ENCODE measurements at regions of chr6 and their contacts with region 1.

Region 1: GRCh38 chr6:21593412-21593926 is at the start of gene SOX4:
- DNase-seq: peak; percentile 92
- ATAC-seq: peak; percentile 74
- H3K4me3 ChIP-seq: peak within 1 kb of the TSS; percentile 56 to 86 (median 71)
- H3K27ac ChIP-seq: no peak within 1 kb of the TSS
- H3K4me1 ChIP-seq: peaks cover 38% of the 10 kb centered on the region
- H3K27me3 ChIP-seq: peaks cover 0 to 37% of the 10 kb centered on the region in 2 experiments; a peak in 3 of 5 replicates
- CTCF ChIP-seq: no peak
- EP300 ChIP-seq: no peak
- POLR2A ChIP-seq: peak; percentile 75 to 76
- RAD21 ChIP-seq: no peak
- total RNA-seq, gene SOX4: 3.4 and 3.5 TPM in 2 replicates

Region 2: DNA sequence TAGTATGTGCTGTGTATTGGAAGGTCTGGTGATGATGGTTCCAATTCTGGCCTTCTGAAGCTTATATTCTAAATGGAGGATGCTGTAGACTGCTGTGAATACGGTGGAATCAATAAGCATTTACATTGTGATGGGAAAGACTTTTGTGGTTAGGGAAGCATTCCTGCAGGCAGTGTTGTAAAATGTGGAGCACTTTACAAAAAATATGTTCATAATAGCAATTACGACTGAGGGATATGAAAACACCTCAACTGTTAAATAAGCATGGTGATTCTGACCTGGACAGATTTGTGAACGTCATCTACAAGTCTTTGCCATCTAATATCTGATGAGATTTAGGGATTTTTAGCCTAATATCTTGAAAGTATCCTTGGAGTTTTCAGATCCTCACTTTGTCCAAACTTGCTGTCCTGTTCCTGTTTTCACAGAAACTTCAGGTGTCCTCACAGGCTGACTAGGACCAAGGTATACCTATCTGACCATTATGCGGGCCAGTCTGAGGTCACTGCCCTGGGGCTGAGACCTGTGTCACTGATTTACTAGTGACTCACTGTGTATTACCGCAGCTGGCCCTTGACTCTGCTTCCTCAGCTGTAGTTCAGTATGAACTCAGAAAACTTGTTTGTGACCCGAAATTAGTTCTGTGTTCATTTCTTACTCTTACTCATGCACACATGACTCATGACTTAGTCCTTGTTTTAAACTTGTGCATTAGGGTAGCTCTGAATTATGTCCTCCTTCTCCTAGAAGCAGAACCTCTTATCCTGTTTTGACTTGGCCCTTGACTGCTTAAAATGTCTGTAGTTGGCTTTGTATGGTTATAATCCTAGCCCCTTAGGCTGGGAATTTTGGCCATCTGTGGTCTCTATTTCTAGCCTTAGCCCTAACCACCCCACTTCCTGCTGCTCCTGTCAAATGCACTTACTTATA is 716.2 kb before region 1 on chr6:
- CTCF ChIA-PET with region 1: interaction called, 18 read pairs
- POLR2A ChIA-PET with region 1: interaction called, 14 read pairs
- in situ Hi-C with region 1: loop called (anchors 5 kb)
- intact Hi-C with region 1: loop called (anchors 1 kb)
- DNase-seq: peak; percentile 93
- ATAC-seq: peak; percentile 100
- H3K4me3 ChIP-seq: peak overlapping the region in 1 of 3 experiments; percentile 8; a peak in 1 of 6 replicates
- H3K27ac ChIP-seq: peak overlapping the region; percentile 70
- H3K4me1 ChIP-seq: peaks cover 62% of the 10 kb centered on the region
- H3K27me3 ChIP-seq: no peaks in the 10 kb centered on the region
- CTCF ChIP-seq: 0 out of 2 replicates have a peak, but pooled peaks have one; percentile 9
- EP300 ChIP-seq: peak; percentile 45 to 88; a peak in 3 of 4 replicates
- POLR2A ChIP-seq: 0 out of 4 replicates have a peak, but pooled peaks of 1 of the 2 experiments have one; percentile 21
- RAD21 ChIP-seq: no peak

Region 3: DNA sequence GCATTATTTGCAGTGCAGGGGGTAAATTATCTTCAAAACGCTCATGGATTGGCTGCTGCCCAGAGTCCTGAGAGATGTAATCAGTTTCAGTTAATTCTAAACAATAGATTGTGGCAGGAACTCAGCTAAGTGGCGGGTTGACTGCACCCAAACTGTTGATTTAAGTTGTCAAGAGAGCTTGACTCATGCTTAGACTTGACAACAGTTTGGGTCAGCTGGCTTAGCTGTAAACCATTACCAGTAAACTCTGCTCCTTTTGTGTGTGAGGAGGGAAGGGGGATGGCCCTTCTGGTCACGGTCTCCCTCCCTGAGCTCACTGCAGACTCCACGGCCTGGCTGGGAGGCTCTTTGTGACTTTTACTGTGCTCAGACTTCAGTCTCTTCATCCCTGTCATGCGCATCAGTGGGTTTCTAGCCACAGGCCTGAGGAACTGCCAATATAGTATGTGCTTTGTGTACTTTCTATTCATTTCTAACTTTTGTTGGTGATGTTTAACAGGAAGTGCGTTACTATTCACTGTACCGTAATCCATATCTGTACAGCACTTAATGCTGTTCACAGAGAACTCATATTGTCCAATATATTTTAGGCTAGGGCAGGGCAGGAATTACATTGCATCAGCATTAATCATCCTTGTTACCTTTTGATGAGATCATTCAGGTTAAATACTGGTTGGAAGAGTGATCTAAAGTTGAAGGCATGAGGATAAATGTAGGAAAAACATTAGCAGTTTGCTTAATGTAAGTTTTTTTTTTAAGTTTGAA is 570.9 kb before region 1 on chr6:
- CTCF ChIA-PET with region 1: no interaction called
- POLR2A ChIA-PET with region 1: interaction called, 5 read pairs
- in situ Hi-C with region 1: no loop called
- intact Hi-C with region 1: loop called (anchors 2 kb)
- DNase-seq: peak; percentile 87
- ATAC-seq: peak; percentile 97
- H3K4me3 ChIP-seq: no peak overlapping the region
- H3K27ac ChIP-seq: peak overlapping the region; percentile 59
- H3K4me1 ChIP-seq: peaks cover 37% of the 10 kb centered on the region
- H3K27me3 ChIP-seq: no peaks in the 10 kb centered on the region
- CTCF ChIP-seq: no peak
- EP300 ChIP-seq: peak in 1 of 2 experiments; percentile 32; a peak in 2 of 4 replicates
- POLR2A ChIP-seq: no peak
- RAD21 ChIP-seq: no peak

Region 4: GRCh38 chr6:21332077-21332476 is 261.4 kb before region 1 on chr6:
- CTCF ChIA-PET with region 1: no interaction called
- POLR2A ChIA-PET with region 1: interaction called, 6 read pairs
- in situ Hi-C with region 1: no loop called
- intact Hi-C with region 1: loop called (anchors 2 kb)
- DNase-seq: no peak
- ATAC-seq: no peak
- H3K4me3 ChIP-seq: no peak overlapping the region
- H3K27ac ChIP-seq: no peak overlapping the region
- H3K4me1 ChIP-seq: peaks cover 9% of the 10 kb centered on the region; the same call in 1 of the 2 replicates
- H3K27me3 ChIP-seq: no peaks in the 10 kb centered on the region; a peak in 1 of 5 replicates
- CTCF ChIP-seq: 0 out of 2 replicates have a peak, but pooled peaks have one; percentile 13
- EP300 ChIP-seq: no peak
- POLR2A ChIP-seq: no peak
- RAD21 ChIP-seq: no peak

Region 5: GRCh38 chr6:21423086-21423854 is 170.2 kb before region 1 on chr6:
- CTCF ChIA-PET with region 1: interaction called, 5 read pairs
- POLR2A ChIA-PET with region 1: no interaction called
- in situ Hi-C with region 1: no loop called
- intact Hi-C with region 1: loop called (anchors 5 kb)
- DNase-seq: no peak
- ATAC-seq: peak; percentile 92
- H3K4me3 ChIP-seq: no peak overlapping the region; a peak in 1 of 6 replicates
- H3K27ac ChIP-seq: no peak overlapping the region
- H3K4me1 ChIP-seq: no peaks in the 10 kb centered on the region
- H3K27me3 ChIP-seq: peaks cover 0 to 10% of the 10 kb centered on the region in 2 experiments; a peak in 2 of 5 replicates
- CTCF ChIP-seq: no peak
- EP300 ChIP-seq: no peak
- POLR2A ChIP-seq: no peak
- RAD21 ChIP-seq: no peak

Region 6: GRCh38 chr6:21610341-21610740 is 16.9 kb after region 1 on chr6:
- CTCF ChIA-PET with region 1: no interaction called
- POLR2A ChIA-PET with region 1: no interaction called
- in situ Hi-C with region 1: no loop called
- intact Hi-C with region 1: no loop called
- DNase-seq: no peak
- ATAC-seq: no peak
- H3K4me3 ChIP-seq: no peak overlapping the region
- H3K27ac ChIP-seq: no peak overlapping the region
- H3K4me1 ChIP-seq: no peaks in the 10 kb centered on the region
- H3K27me3 ChIP-seq: no peaks in the 10 kb centered on the region; a peak in 1 of 5 replicates
- CTCF ChIP-seq: no peak
- EP300 ChIP-seq: no peak
- POLR2A ChIP-seq: no peak
- RAD21 ChIP-seq: no peak

Measured in HepG2 (cell line).